Endothelial cell of umbilical vein (primary cell): ENCODE measurements at regions of chr3 and their contacts with region 1.

Region 1: DNA sequence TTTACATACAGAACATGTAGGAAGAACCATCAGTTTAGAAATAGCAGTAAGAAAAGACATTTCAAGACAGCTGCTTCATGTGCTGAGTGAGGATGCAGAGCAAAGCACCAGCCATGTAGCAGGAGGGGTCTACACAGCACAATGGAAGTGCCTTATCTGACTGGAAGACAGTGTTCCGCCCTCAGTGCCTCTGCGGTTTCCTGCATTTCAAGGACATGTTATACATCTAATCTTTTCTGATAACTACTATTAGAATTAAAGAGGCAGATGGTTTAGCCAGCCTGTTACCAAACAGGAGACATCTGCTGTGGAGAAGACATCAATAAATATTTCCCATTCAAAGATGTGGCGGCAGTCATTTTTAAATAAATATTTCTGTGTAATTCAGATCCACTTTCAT is 10.6 kb downstream of the LSG1 start:
- DNase-seq: peak; percentile 88
- H3K4me3 ChIP-seq: peak overlapping the region in 1 of 3 experiments; percentile 5
- H3K27ac ChIP-seq: peak overlapping the region; percentile 70
- H3K4me1 ChIP-seq: peaks cover 66% of the 10 kb centered on the region
- H3K27me3 ChIP-seq: no peaks in the 10 kb centered on the region
- CTCF ChIP-seq: no peak
- POLR2A ChIP-seq: peak; percentile 58

Region 2: GRCh38 chr3:194632809-194633348 is 28.5 kb before region 1 on chr3:
- CTCF ChIA-PET with region 1: interaction called, 36 read pairs
- POLR2A ChIA-PET with region 1: no interaction called
- dilution Hi-C with region 1: no loop called
- intact Hi-C with region 1: no loop called
- DNase-seq: peak; percentile 23
- H3K4me3 ChIP-seq: peak overlapping the region; percentile 70 to 96 (median 94)
- H3K27ac ChIP-seq: peak overlapping the region; percentile 83
- H3K4me1 ChIP-seq: peaks cover 17% of the 10 kb centered on the region
- H3K27me3 ChIP-seq: no peaks in the 10 kb centered on the region
- CTCF ChIP-seq: no peak
- POLR2A ChIP-seq: no peak

Region 3: GRCh38 chr3:194640829-194641228 is 20.5 kb before region 1 on chr3:
- CTCF ChIA-PET with region 1: interaction called, 36 read pairs
- POLR2A ChIA-PET with region 1: interaction called, 10 read pairs
- dilution Hi-C with region 1: no loop called
- intact Hi-C with region 1: loop called (anchors 1 kb)
- DNase-seq: peak; percentile 79
- H3K4me3 ChIP-seq: peak overlapping the region in 1 of 3 experiments; percentile 14
- H3K27ac ChIP-seq: peak overlapping the region; percentile 91
- H3K4me1 ChIP-seq: peaks cover 35% of the 10 kb centered on the region
- H3K27me3 ChIP-seq: no peaks in the 10 kb centered on the region
- CTCF ChIP-seq: peak; percentile 49 to 61
- POLR2A ChIP-seq: no peak

Region 4: DNA sequence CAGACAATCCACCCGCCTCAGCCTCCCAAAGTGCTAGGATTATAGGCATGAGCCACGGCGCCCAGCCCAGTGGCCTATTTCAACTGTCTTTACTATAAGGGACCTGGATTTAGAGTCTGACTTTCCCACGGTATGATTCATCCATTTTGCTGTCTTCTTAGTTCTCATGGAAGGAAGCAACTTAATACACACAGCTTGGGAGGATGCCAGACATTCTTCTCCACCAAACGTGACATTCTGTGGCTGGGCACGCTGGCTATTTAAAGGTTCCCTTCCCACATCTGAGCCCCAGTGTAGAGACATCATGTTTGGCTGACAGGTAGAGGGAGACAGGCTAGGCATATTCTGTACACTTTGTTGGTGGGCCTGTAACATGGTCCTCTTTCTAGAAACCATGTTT is 50.5 kb after region 1 on chr3:
- CTCF ChIA-PET with region 1: no interaction called
- POLR2A ChIA-PET with region 1: no interaction called
- dilution Hi-C with region 1: no loop called
- intact Hi-C with region 1: no loop called
- DNase-seq: peak; percentile 97
- H3K4me3 ChIP-seq: no peak overlapping the region
- H3K27ac ChIP-seq: peak overlapping the region; percentile 73
- H3K4me1 ChIP-seq: peaks cover 28% of the 10 kb centered on the region
- H3K27me3 ChIP-seq: no peaks in the 10 kb centered on the region
- CTCF ChIP-seq: no peak
- POLR2A ChIP-seq: no peak

Region 5: GRCh38 chr3:194757647-194758061 is 96.3 kb after region 1 on chr3:
- CTCF ChIA-PET with region 1: no interaction called
- POLR2A ChIA-PET with region 1: no interaction called
- dilution Hi-C with region 1: no loop called
- intact Hi-C with region 1: no loop called
- DNase-seq: no peak
- H3K4me3 ChIP-seq: no peak overlapping the region
- H3K27ac ChIP-seq: no peak overlapping the region
- H3K4me1 ChIP-seq: no peaks in the 10 kb centered on the region
- H3K27me3 ChIP-seq: no peaks in the 10 kb centered on the region
- CTCF ChIP-seq: no peak
- POLR2A ChIP-seq: no peak

Region 6: GRCh38 chr3:195207731-195208585 is 546.6 kb after region 1 on chr3:
- CTCF ChIA-PET with region 1: no interaction called
- POLR2A ChIA-PET with region 1: no interaction called
- dilution Hi-C with region 1: no loop called
- intact Hi-C with region 1: no loop called
- DNase-seq: no peak
- H3K4me3 ChIP-seq: no peak overlapping the region
- H3K27ac ChIP-seq: no peak overlapping the region
- H3K4me1 ChIP-seq: peaks cover 46% of the 10 kb centered on the region
- H3K27me3 ChIP-seq: no peaks in the 10 kb centered on the region
- CTCF ChIP-seq: no peak
- POLR2A ChIP-seq: no peak